ENCODE measurements at regions of chr6 and their contacts with region 1.

Region 1: GRCh38 chr6:125995972-125996580 is 9.7 kb downstream of the TRMT11 start:
- DNase-seq: peak; percentile 52 to 87 (median 64)
- ATAC-seq: peak; percentile 99
- H3K4me3 ChIP-seq: peak overlapping the region; percentile 28
- H3K4me3 Mint-ChIP-seq: peak overlapping the region; percentile 71
- H3K27ac ChIP-seq: no peak overlapping the region
- H3K27ac Mint-ChIP-seq: no peak overlapping the region
- H3K4me1 ChIP-seq: no peaks in the 10 kb centered on the region
- H3K4me1 Mint-ChIP-seq: peaks cover 32% of the 10 kb centered on the region
- H3K27me3 ChIP-seq: no peaks in the 10 kb centered on the region
- H3K27me3 Mint-ChIP-seq: no peaks in the 10 kb centered on the region
- CTCF ChIP-seq: peak; percentile 99

Region 2: DNA sequence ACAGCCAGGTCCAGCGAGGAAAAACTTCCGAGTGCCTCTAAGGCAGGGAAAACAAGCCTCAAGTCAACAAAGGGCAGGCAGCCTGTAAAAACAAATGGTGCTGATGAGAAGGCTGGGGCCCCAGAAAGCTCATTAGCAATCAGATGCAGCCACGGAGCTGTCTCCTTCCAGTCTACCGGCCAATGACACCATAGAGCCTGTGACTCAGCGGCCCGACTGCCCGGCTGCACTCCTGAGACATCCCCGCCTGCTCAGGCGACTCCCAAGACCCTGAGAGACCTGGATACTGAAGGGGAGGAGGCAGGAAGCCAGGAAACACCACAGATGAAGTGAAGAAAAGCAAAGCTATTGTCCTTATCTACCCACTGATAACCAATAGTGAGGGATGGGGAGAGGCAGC is 574.2 kb before region 1 on chr6:
- CTCF ChIA-PET with region 1: no interaction called
- POLR2A ChIA-PET with region 1: no interaction called
- intact Hi-C with region 1: no loop called
- DNase-seq: no peak
- ATAC-seq: no peak
- H3K4me3 ChIP-seq: no peak overlapping the region
- H3K4me3 Mint-ChIP-seq: no peak overlapping the region
- H3K27ac ChIP-seq: no peak overlapping the region
- H3K27ac Mint-ChIP-seq: no peak overlapping the region
- H3K4me1 ChIP-seq: no peaks in the 10 kb centered on the region
- H3K4me1 Mint-ChIP-seq: no peaks in the 10 kb centered on the region
- H3K27me3 ChIP-seq: no peaks in the 10 kb centered on the region
- H3K27me3 Mint-ChIP-seq: no peaks in the 10 kb centered on the region
- CTCF ChIP-seq: no peak

Region 3: GRCh38 chr6:126170978-126171382 is 174.9 kb after region 1 on chr6:
- CTCF ChIA-PET with region 1: no interaction called
- POLR2A ChIA-PET with region 1: no interaction called
- intact Hi-C with region 1: loop called in 1 of 2 experiments (anchors 5 kb)
- DNase-seq: peak in 5 of 14 experiments; percentile 2 to 49 (median 35)
- ATAC-seq: no peak
- H3K4me3 ChIP-seq: no peak overlapping the region
- H3K4me3 Mint-ChIP-seq: no peak overlapping the region
- H3K27ac ChIP-seq: no peak overlapping the region
- H3K27ac Mint-ChIP-seq: no peak overlapping the region
- H3K4me1 ChIP-seq: no peaks in the 10 kb centered on the region
- H3K4me1 Mint-ChIP-seq: no peaks in the 10 kb centered on the region
- H3K27me3 ChIP-seq: no peaks in the 10 kb centered on the region
- H3K27me3 Mint-ChIP-seq: no peaks in the 10 kb centered on the region
- CTCF ChIP-seq: no peak

Region 4: DNA sequence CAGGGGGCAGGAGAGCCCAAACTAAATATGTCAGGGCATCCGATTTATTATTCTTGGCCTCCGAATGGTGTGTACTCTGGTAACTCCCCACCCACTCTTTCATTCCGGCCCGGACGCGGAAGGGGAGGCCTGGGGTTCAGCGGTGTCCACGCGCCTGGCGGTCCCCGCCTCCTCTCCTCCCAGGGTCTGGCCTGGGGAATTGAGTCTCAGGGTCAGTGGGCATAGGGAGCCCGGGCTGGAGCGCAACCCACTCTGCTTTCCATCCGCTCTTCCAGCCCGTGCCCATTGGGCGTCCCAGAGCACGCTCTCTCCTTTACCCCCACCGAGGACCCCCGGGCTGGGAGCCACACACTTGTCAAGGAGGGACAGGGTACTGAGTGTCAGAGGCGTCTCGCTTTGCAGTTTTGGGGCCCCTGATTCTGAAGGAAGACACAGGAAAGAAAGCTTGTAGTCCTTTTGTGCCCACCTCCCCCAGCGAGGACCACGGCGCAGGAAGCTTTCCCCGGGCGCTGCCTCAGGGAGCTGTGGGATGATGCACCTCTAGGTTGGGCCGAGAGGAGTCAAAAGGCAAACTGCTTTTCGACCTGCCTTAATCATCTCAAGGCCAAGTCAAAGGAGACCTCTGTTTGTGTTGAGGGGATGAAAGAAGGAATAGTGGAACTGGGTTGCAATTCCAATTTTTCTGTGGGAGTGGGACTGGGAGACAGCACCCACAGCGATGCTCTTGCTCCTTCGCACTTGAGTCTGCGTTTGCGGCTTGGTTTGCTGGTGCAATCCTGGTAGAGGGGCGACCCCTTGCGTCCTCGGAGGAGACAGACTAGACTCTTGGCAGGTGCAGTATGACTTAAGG is 1124.9 kb after region 1 on chr6:
- CTCF ChIA-PET with region 1: no interaction called
- POLR2A ChIA-PET with region 1: no interaction called
- intact Hi-C with region 1: loop called in 1 of 2 experiments (anchors 5 kb)
- DNase-seq: peak; percentile 17 to 67 (median 42)
- ATAC-seq: peak; percentile 64
- H3K4me3 ChIP-seq: no peak overlapping the region
- H3K4me3 Mint-ChIP-seq: peak overlapping the region; percentile 6
- H3K27ac ChIP-seq: no peak overlapping the region
- H3K27ac Mint-ChIP-seq: no peak overlapping the region
- H3K4me1 ChIP-seq: peaks cover 30% of the 10 kb centered on the region
- H3K4me1 Mint-ChIP-seq: peaks cover 30% of the 10 kb centered on the region
- H3K27me3 ChIP-seq: peaks cover 35 to 68% of the 10 kb centered on the region in 2 experiments
- H3K27me3 Mint-ChIP-seq: peaks cover 71% of the 10 kb centered on the region
- CTCF ChIP-seq: peak; percentile 51

Measured in CD4-positive, alpha-beta T cell (primary cell).